AG04449 (cell line): ENCODE measurements at regions of chr3 and their contacts with region 1.

Region 1: GRCh38 chr3:133040696-133041523 is 2.7 kb downstream of the TMEM108 start:
- DNase-seq: peak; percentile 12
- H3K4me3 ChIP-seq: no peak overlapping the region
- CTCF ChIP-seq: peak; percentile 85

Region 2: DNA sequence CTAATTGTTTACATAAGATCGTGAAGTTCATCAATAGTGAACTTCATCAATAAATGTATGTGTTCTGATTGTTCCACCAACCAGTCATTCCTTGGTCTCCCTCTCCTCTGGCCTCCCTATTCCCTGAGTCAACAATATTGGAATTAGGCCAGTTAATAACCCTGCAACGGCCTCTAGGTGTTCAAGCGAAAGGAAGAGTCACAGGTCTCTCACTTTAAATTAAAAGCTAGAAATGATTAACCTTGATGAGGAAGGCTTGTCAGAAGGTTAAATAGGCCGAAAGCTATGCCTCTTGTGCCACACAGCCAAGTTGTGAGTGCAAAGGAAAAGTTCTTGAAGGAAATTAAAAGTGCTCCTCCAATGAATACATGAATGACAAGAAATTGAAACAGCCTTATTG is 533.3 kb before region 1 on chr3:
- CTCF ChIA-PET with region 1: no interaction called
- POLR2A ChIA-PET with region 1: no interaction called
- DNase-seq: no peak
- H3K4me3 ChIP-seq: no peak overlapping the region
- CTCF ChIP-seq: no peak

Region 3: GRCh38 chr3:132722164-132723024 is 318.5 kb before region 1 on chr3 and contains the start of gene NPHP3:
- CTCF ChIA-PET with region 1: interaction called, 45 read pairs
- POLR2A ChIA-PET with region 1: no interaction called
- DNase-seq: peak; percentile 78
- H3K4me3 ChIP-seq: peak within 1 kb of the TSS; percentile 79
- CTCF ChIP-seq: no peak

Region 4: DNA sequence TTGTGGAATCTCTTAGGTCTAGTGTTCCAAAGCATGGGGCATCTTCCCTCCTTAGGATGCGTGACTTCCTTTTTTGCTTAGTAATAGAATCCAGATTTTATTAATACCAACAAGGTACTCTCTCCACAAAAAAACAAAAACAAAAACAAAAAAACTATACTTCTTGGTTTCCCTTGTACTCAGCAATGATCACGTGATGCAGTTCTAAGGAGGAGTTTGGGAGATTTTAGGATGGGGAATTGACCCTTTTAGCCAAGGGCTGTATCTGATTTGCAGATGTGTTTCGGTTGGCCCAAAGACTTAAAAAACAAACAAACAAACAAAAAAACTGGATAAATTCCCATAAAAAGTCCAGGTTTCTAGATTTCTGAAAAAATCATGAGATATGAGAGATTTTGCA is 15.4 kb before region 1 on chr3:
- CTCF ChIA-PET with region 1: interaction called, 10 read pairs
- POLR2A ChIA-PET with region 1: no interaction called
- DNase-seq: no peak
- H3K4me3 ChIP-seq: no peak overlapping the region
- CTCF ChIP-seq: no peak

Region 5: GRCh38 chr3:133089906-133090485 is 49.1 kb after region 1 on chr3:
- CTCF ChIA-PET with region 1: no interaction called
- POLR2A ChIA-PET with region 1: no interaction called
- DNase-seq: no peak
- H3K4me3 ChIP-seq: no peak overlapping the region
- CTCF ChIP-seq: no peak

Region 6: DNA sequence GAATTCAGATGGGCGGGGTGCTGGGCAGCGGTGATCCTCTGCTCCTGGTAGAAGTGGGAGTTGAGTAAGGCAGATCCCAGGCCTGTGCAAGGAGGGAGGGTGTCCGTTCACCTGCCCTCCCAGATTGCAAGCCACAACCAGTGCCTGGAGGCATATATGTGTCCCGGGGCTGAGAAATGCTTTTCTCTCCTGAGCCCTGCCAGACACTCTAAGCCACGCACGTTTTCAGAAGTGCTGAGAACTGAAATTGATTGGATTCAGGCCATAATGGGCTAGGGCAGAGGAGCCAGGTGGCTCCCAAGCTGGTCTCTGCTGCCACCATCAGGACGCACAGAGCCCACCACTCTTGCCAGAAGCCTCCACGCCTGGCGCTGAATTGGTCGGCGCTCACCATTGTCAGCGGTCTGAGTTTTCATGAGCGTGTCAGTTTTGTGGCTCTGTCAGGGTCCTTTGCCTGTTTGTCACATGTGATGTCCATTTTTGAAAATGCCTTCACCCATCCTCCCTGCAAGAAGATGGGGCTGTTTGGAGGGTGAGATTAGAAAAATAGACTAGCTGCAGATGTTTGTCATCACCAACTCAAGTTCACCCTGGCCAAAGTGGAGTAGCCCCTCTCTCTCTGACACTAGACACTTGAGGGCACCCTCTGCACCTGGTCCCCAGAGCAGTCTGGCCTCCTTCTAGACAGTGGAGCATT is 343.6 kb after region 1 on chr3:
- CTCF ChIA-PET with region 1: interaction called, 297 read pairs
- POLR2A ChIA-PET with region 1: no interaction called
- DNase-seq: no peak
- H3K4me3 ChIP-seq: no peak overlapping the region
- CTCF ChIP-seq: peak; percentile 89

Region 7: GRCh38 chr3:133426721-133427120 is 385.8 kb after region 1 on chr3:
- CTCF ChIA-PET with region 1: interaction called, 104 read pairs
- POLR2A ChIA-PET with region 1: no interaction called
- DNase-seq: peak; percentile 64
- H3K4me3 ChIP-seq: no peak overlapping the region
- CTCF ChIP-seq: no peak